ENCODE measurements at regions of chr6 and their contacts with region 1.

Region 1: GRCh38 chr6:166786704-166787293 is 159.7 kb upstream of the RPS6KA2 start:
- DNase-seq: peak; percentile 80
- H3K4me3 ChIP-seq: no peak overlapping the region
- H3K27ac ChIP-seq: no peak overlapping the region
- H3K4me1 ChIP-seq: no peaks in the 10 kb centered on the region
- CTCF ChIP-seq: peak; percentile 97

Region 2: DNA sequence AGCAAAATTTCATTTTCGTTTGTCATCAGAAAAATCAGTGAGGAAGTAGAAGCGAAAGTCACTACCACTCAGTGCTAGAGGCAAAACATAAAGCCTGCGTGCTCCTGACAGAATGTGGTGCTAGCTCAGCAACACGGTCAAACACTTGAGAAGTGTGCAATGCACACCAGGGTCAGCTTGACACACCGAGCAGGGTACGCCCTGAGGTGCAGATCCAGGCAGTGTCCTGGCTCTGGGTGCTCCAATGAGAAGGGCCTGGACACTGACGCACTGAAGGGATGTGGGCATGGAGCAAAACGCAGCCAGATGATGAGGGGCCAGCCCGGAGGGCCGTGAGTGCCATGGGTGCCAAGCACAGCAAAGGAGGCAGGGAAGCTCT is 163.6 kb after region 1 on chr6:
- CTCF ChIA-PET with region 1: no interaction called
- POLR2A ChIA-PET with region 1: no interaction called
- intact Hi-C with region 1: loop called (anchors 1 kb)
- DNase-seq: peak; percentile 66
- H3K4me3 ChIP-seq: peak overlapping the region; percentile 64
- H3K27ac ChIP-seq: peak overlapping the region; percentile 87
- H3K4me1 ChIP-seq: peaks cover 60% of the 10 kb centered on the region
- CTCF ChIP-seq: no peak

Region 3: DNA sequence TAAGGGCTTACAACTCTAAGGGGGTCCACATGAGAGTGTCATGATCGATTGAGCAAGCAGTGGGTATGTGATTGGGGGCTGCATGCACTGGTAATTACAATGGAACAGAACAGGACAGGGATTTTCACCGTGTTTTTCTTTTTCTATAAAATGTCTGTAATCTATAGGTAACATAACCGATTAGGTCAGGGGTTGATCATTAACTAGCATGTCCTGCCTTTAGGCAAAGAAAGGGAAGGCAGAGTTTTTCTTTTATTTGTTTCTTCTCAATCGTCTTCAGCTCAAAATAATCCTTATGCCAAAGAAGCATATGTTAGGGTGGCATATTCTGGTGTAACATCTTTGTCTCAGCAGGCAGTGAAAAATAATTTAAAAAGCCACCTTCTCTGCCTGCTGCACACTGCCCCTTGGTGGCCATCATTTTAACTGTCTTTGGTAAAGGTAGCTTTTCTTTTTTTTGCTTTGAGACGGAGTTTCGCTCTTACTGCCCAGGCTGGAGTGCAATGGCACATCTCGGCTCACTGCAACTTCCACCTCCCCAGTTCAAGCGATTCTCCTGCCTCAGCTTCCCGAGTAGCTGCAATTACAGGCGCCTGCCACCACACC is 202.7 kb after region 1 on chr6:
- CTCF ChIA-PET with region 1: interaction called, 4 read pairs
- POLR2A ChIA-PET with region 1: interaction called, 3 read pairs
- intact Hi-C with region 1: loop called (anchors 1 kb)
- DNase-seq: peak; percentile 60
- H3K4me3 ChIP-seq: no peak overlapping the region
- H3K27ac ChIP-seq: no peak overlapping the region
- H3K4me1 ChIP-seq: peaks cover 4% of the 10 kb centered on the region
- CTCF ChIP-seq: peak; percentile 77